Natural killer cell (primary cell): ENCODE measurements at regions of chr14 and their contacts with region 1.

Region 1: DNA sequence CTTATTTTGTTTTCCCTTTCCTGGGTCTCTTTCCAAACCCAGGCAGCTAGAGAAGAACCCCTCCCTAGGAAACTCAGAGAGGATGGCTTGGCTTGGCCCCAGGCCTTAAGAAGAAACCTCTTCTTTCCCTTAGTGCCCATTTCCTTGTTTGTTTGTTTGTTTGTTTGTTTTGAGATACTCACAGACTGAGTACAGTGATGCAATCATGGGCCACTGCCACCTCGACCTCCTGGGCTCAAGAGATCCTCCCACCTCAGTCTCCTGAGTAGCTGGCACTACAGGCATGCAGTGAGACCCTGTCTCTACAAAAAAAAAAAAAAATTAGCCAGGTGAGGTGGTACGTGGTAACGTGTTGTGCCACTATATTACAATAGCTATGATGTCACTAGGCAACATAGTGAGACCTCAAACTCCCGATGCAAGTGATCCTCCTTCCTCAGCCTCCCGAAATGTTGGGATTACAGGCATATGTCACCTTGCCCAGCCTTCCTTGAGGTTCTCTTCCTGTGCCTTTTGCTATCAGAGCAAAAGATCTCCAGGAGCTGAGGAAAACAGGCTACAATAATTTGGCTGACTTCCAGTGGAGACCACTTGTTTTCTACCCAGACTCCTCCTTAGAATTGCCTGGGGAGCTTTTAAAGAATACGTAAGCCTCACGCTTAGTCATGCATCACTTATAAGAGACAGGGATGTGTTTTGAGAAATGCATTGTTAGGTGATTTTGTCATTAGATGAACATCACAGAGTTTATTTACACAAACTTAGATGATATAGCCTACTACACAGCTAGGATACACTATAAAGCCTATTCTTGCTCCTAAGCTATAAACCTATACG is 34.5 kb upstream of the LGALS3 start:
- DNase-seq: no peak
- ATAC-seq: no peak
- H3K4me3 ChIP-seq: no peak overlapping the region
- H3K4me3 Mint-ChIP-seq: no peak overlapping the region
- H3K27ac ChIP-seq: no peak overlapping the region
- H3K27ac Mint-ChIP-seq: no peak overlapping the region
- H3K4me1 ChIP-seq: peaks cover 16% of the 10 kb centered on the region
- H3K4me1 Mint-ChIP-seq: peaks cover 9 to 15% of the 10 kb centered on the region in 2 donors
- H3K27me3 ChIP-seq: no peaks in the 10 kb centered on the region
- H3K27me3 Mint-ChIP-seq: no peaks in the 10 kb centered on the region
- CTCF ChIP-seq: no peak

Region 2: DNA sequence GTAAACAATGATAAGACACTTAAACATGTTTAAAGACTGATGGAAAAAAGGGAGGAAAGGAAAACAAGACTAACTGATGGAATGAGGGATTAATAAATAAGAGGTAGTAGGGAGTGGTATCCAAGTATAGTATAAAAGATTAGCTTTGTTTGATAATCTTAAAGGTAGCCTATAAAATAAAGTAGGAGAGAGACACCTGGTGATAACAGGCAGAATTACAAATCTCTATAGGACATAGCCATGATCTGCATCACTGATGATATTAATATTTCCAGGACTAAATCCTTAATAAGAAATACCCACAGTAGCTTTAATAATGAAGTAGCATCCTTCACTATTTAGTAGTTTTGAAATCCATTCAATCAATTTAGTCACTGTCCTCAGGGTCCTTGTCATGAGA is 66.5 kb after region 1 on chr14:
- intact Hi-C with region 1: loop called (anchors 1 kb)
- DNase-seq: peak in 1 of 2 donors; percentile 65
- ATAC-seq: peak; percentile 57 to 87 (median 76)
- H3K4me3 ChIP-seq: no peak overlapping the region
- H3K4me3 Mint-ChIP-seq: no peak overlapping the region
- H3K27ac ChIP-seq: no peak overlapping the region
- H3K27ac Mint-ChIP-seq: no peak overlapping the region
- H3K4me1 ChIP-seq: no peaks in the 10 kb centered on the region
- H3K4me1 Mint-ChIP-seq: peaks cover 0 to 5% of the 10 kb centered on the region in 2 donors
- H3K27me3 ChIP-seq: no peaks in the 10 kb centered on the region
- H3K27me3 Mint-ChIP-seq: no peaks in the 10 kb centered on the region
- CTCF ChIP-seq: peak; percentile 67